GM12878 (cell line): ENCODE measurements at regions of chr10 and their contacts with region 1.

Region 1: GRCh38 chr10:21495752-21496342 is 29.6 kb downstream of the SKIDA1 start:
- DNase-seq: peak; percentile 34
- ATAC-seq: peak; percentile 89
- H3K4me3 ChIP-seq: peak overlapping the region; percentile 65
- H3K27ac ChIP-seq: peak overlapping the region; percentile 35; the same call in 1 of the 2 replicates
- H3K4me1 ChIP-seq: peaks cover 20% of the 10 kb centered on the region
- H3K27me3 ChIP-seq: peaks cover 5 to 18% of the 10 kb centered on the region in 2 experiments
- CTCF ChIP-seq: peak; percentile 84 to 97 (median 89); a peak in 5 of 6 replicates
- EP300 ChIP-seq: 0 out of 4 replicates have a peak, but pooled peaks of 1 of the 2 experiments have one; percentile 34
- POLR2A ChIP-seq: peak; percentile 61
- RAD21 ChIP-seq: peak; percentile 85

Region 2: DNA sequence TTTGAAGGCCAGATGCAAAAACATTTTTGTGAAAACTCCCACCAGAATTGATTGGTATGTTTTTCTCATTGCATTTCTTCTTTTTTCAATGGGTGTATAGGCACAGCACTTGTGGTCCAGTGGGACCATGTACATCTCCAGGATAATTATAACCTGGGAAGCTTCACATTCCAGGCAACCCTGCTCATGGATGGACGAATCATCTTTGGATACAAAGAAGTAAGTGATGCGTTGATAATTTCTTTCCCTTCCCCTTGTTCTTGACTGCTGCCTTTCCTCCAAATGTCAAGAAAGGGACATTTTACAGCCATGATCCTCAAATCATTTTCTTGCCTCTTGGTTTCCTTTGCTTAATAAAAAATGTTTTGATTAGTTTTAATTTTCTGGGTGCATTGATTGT is 1348.2 kb before region 1 on chr10:
- CTCF ChIA-PET with region 1: no interaction called
- POLR2A ChIA-PET with region 1: no interaction called
- RAD21 ChIA-PET with region 1: no interaction called
- SMC1A ChIA-PET with region 1: no interaction called
- in situ Hi-C with region 1: no loop called
- intact Hi-C with region 1: no loop called
- DNase-seq: no peak
- ATAC-seq: no peak
- H3K4me3 ChIP-seq: no peak overlapping the region
- H3K27ac ChIP-seq: no peak overlapping the region
- H3K4me1 ChIP-seq: no peaks in the 10 kb centered on the region
- H3K27me3 ChIP-seq: no peaks in the 10 kb centered on the region
- CTCF ChIP-seq: no peak
- EP300 ChIP-seq: no peak
- POLR2A ChIP-seq: no peak
- RAD21 ChIP-seq: no peak

Region 3: GRCh38 chr10:21217107-21217506 is 278.7 kb before region 1 on chr10:
- CTCF ChIA-PET with region 1: no interaction called
- POLR2A ChIA-PET with region 1: no interaction called
- RAD21 ChIA-PET with region 1: no interaction called
- SMC1A ChIA-PET with region 1: no interaction called
- in situ Hi-C with region 1: no loop called
- intact Hi-C with region 1: no loop called
- DNase-seq: no peak
- ATAC-seq: no peak
- H3K4me3 ChIP-seq: no peak overlapping the region
- H3K27ac ChIP-seq: no peak overlapping the region
- H3K4me1 ChIP-seq: no peaks in the 10 kb centered on the region
- H3K27me3 ChIP-seq: no peaks in the 10 kb centered on the region
- CTCF ChIP-seq: no peak
- EP300 ChIP-seq: no peak
- POLR2A ChIP-seq: no peak
- RAD21 ChIP-seq: no peak

Region 4: GRCh38 chr10:21649454-21649872 is 153.6 kb after region 1 on chr10:
- CTCF ChIA-PET with region 1: no interaction called
- POLR2A ChIA-PET with region 1: no interaction called
- RAD21 ChIA-PET with region 1: no interaction called
- SMC1A ChIA-PET with region 1: no interaction called
- in situ Hi-C with region 1: no loop called
- intact Hi-C with region 1: no loop called
- DNase-seq: no peak
- ATAC-seq: no peak
- H3K4me3 ChIP-seq: no peak overlapping the region
- H3K27ac ChIP-seq: no peak overlapping the region
- H3K4me1 ChIP-seq: no peaks in the 10 kb centered on the region
- H3K27me3 ChIP-seq: no peaks in the 10 kb centered on the region
- CTCF ChIP-seq: no peak
- EP300 ChIP-seq: no peak
- POLR2A ChIP-seq: no peak
- RAD21 ChIP-seq: no peak

Region 5: DNA sequence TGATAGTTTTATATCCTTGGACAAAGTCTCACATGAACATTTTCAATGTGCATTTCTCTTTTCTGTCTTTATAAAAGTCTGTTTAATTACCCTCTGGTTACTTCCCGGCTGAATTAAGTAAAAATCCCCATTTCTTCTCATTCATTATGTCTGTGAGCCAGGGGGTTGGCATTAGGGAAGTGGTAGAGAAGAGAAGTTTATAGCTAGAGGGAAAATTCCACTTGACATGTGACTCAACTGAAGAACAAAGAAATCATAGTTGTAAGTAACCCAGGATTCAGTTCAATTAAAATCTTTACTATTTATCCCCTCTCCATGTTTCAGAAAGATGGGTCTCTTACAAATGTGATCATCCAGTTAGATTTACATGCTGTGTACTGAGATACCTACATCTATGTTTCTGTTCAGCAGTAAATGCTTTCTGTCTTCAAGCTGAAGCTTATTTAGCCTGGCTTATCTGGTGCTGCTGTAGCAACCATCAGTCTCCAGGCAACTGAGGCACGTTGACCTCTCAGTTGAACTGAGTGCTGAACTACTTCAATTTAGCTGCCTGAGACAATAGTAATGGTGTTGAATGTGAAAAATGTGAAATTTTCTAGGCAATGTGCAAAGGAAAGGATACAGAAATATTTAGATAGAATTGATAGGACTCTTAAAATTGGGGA is 219.8 kb after region 1 on chr10:
- CTCF ChIA-PET with region 1: interaction called, 10 read pairs
- POLR2A ChIA-PET with region 1: no interaction called
- RAD21 ChIA-PET with region 1: interaction called, 4 read pairs
- SMC1A ChIA-PET with region 1: interaction called, 5 read pairs
- in situ Hi-C with region 1: no loop called
- intact Hi-C with region 1: no loop called
- DNase-seq: no peak
- ATAC-seq: no peak
- H3K4me3 ChIP-seq: no peak overlapping the region
- H3K27ac ChIP-seq: no peak overlapping the region
- H3K4me1 ChIP-seq: peaks cover 9% of the 10 kb centered on the region
- H3K27me3 ChIP-seq: no peaks in the 10 kb centered on the region
- CTCF ChIP-seq: no peak
- EP300 ChIP-seq: no peak
- POLR2A ChIP-seq: no peak
- RAD21 ChIP-seq: no peak

Region 6: DNA sequence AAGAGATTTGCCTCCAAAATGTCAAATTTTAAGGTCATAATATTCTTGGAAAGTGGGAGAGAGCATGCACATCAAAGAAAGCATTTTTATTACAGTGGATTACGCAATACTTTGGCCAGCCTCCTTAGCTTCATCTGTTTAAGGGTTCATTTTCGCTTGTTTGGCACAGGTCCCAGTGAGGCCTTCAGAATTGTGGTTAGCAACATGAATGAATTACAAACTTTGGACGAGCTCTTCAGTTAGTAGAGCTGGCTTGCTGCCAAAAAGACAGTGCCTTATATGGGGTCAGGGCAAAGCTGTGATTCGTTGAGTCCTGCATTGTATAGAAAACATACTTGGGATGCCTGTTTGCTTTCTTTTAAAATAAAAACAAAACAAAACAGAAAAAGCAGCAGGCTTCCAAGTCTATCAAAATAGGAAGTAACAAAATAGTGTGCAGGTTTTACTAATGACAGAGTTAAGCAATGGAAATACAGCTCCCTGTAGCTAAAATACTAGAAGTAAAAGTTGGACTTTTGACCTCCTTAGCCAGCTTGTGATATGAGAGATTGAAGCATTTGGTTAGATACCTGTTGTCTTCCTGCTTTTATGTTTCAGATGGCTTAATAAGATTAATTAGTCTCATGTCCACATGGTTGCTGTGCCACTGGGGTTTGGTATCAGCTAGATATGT is 229.0 kb after region 1 on chr10:
- CTCF ChIA-PET with region 1: interaction called, 66 read pairs
- POLR2A ChIA-PET with region 1: no interaction called
- RAD21 ChIA-PET with region 1: interaction called, 16 read pairs
- SMC1A ChIA-PET with region 1: interaction called, 15 read pairs
- in situ Hi-C with region 1: loop called (anchors 5 kb)
- intact Hi-C with region 1: no loop called
- DNase-seq: peak; percentile 59
- ATAC-seq: peak; percentile 93
- H3K4me3 ChIP-seq: no peak overlapping the region
- H3K27ac ChIP-seq: 0 out of 2 replicates have a peak overlapping the region, but pooled peaks have one; percentile 22
- H3K4me1 ChIP-seq: peaks cover 11% of the 10 kb centered on the region
- H3K27me3 ChIP-seq: no peaks in the 10 kb centered on the region
- CTCF ChIP-seq: no peak
- EP300 ChIP-seq: no peak
- POLR2A ChIP-seq: no peak
- RAD21 ChIP-seq: no peak

Region 7: GRCh38 chr10:21732067-21732772 is 236.4 kb after region 1 on chr10:
- CTCF ChIA-PET with region 1: interaction called, 66 read pairs
- POLR2A ChIA-PET with region 1: interaction called, 3 read pairs
- RAD21 ChIA-PET with region 1: interaction called, 22 read pairs
- SMC1A ChIA-PET with region 1: interaction called, 19 read pairs
- in situ Hi-C with region 1: loop called (anchors 5 kb)
- intact Hi-C with region 1: loop called (anchors 2 kb)
- DNase-seq: no peak
- ATAC-seq: peak; percentile 82
- H3K4me3 ChIP-seq: no peak overlapping the region
- H3K27ac ChIP-seq: no peak overlapping the region
- H3K4me1 ChIP-seq: no peaks in the 10 kb centered on the region
- H3K27me3 ChIP-seq: no peaks in the 10 kb centered on the region
- CTCF ChIP-seq: peak; percentile 74 to 86 (median 79)
- EP300 ChIP-seq: no peak
- POLR2A ChIP-seq: no peak
- RAD21 ChIP-seq: peak; percentile 92

Region 8: DNA sequence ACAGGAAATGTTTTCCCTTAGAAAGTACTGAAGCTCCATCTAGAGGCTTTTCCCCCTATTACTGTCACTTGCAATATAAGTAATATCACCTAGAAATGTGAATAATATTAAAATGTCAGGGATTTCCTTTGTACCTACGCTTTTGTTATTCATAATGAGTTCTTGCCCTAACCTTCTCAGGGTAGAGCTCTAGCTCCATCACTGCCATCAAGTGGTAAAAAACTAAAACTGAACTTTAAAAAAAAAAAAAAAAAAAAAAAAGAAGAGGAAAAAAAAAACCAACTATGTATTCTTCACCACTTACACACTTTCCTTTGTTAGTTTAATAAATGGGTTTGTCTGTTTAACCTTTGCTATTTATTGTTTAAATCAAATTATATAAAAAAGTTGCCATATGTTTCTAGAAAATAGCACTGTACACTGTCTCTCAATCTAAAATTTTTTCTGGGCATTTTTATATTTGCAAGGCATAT is 457.8 kb after region 1 on chr10:
- CTCF ChIA-PET with region 1: interaction called, 20 read pairs
- POLR2A ChIA-PET with region 1: no interaction called
- RAD21 ChIA-PET with region 1: interaction called, 12 read pairs
- SMC1A ChIA-PET with region 1: interaction called, 3 read pairs
- in situ Hi-C with region 1: no loop called
- intact Hi-C with region 1: loop called (anchors 5 kb)
- DNase-seq: no peak
- ATAC-seq: peak; percentile 88
- H3K4me3 ChIP-seq: no peak overlapping the region
- H3K27ac ChIP-seq: no peak overlapping the region
- H3K4me1 ChIP-seq: peaks cover 12% of the 10 kb centered on the region
- H3K27me3 ChIP-seq: no peaks in the 10 kb centered on the region
- CTCF ChIP-seq: peak; percentile 33 to 39 (median 37); a peak in 4 of 6 replicates
- EP300 ChIP-seq: no peak
- POLR2A ChIP-seq: no peak
- RAD21 ChIP-seq: peak; percentile 67

Region 9: DNA sequence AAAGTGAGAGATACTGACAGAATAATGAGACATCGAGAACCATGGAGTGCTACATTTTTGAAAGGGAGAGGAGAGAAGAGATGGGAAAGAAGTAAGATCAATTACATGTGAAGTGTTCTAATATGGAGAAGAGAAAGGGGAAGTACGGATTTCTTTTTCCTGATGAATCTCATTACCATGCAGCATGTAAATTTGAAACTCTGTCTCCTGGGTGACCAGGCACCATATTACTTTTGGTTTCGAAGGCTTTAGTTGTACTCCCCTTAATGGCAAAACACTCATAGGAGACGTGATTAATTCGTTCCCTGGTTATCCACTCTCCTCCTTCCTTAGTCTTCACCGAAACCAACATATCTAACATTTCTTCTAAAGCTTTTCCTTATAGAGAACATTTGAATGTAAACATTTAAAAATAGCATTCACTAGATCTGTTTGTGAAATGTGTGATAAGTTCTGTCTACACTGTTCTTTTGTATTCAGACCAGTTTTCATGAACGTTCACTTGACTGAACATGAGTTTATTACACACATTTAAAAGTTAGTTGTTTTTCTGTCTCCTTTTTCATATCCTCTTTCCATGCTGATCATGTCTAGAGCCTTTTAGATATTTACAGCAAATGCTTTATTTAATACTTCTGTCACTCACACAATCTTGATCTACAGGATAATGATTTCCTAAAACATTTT is 1519.3 kb after region 1 on chr10:
- CTCF ChIA-PET with region 1: no interaction called
- POLR2A ChIA-PET with region 1: no interaction called
- RAD21 ChIA-PET with region 1: no interaction called
- SMC1A ChIA-PET with region 1: no interaction called
- in situ Hi-C with region 1: loop called (anchors 25 kb)
- intact Hi-C with region 1: no loop called
- DNase-seq: peak; percentile 72
- ATAC-seq: peak; percentile 99
- H3K4me3 ChIP-seq: no peak overlapping the region
- H3K27ac ChIP-seq: peak overlapping the region; percentile 61; the same call in 1 of the 2 replicates
- H3K4me1 ChIP-seq: peaks cover 6% of the 10 kb centered on the region
- H3K27me3 ChIP-seq: no peaks in the 10 kb centered on the region
- CTCF ChIP-seq: no peak
- EP300 ChIP-seq: no peak
- POLR2A ChIP-seq: no peak
- RAD21 ChIP-seq: no peak